Naive thymus-derived CD4-positive, alpha-beta T cell (primary cell): ENCODE measurements at regions of chr1 and their contacts with region 1.

Region 1: DNA sequence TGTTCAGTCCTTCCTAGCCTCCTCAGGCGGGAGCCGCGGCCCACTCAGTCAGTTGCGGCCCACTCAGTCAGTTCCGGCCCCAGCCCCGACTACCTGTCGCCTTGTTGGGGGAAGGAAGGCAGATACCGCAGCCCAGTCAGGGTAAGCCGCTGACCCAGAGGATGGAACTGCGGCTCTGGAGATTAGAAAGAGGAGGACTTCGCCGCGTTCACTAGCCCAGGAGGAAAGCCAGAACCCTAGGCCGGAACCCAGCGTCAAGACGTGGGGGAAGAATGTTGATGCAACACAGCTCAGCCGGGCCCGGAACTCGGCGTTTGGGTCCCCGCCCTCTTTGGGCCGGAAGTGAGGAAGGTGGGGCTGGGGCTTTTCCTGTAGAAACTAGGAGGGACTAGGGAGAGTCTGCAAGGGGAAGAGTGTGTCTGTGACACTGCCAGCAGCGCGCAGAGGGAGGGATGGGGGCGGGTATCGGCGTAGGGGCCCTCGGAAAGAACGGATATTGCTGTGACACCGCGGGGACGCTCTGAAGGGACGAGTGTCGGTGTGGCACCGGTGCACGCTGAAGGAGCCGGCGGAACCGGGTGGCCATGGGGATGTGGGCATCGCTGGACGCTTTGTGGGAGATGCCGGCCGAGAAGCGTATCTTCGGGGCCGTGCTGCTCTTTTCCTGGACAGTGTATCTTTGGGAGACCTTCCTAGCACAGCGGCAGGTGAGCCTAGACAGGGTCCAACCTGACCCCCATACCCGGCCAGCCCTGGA is at the start of gene ZMPSTE24:
- DNase-seq: peak; percentile 84 to 98 (median 95)
- ATAC-seq: peak; percentile 98
- H3K4me3 ChIP-seq: peak within 1 kb of the TSS; percentile 98
- H3K4me3 Mint-ChIP-seq: peak within 1 kb of the TSS; percentile 91 to 100 (median 98)
- H3K27ac ChIP-seq: peak within 1 kb of the TSS; percentile 98
- H3K27ac Mint-ChIP-seq: peak within 1 kb of the TSS; percentile 97 to 100 (median 100)
- H3K4me1 ChIP-seq: peaks cover 14% of the 10 kb centered on the region in 2 donors
- H3K4me1 Mint-ChIP-seq: peaks cover 27 to 71% (median 60%) of the 10 kb centered on the region in 7 donors
- H3K27me3 ChIP-seq: no peaks in the 10 kb centered on the region
- H3K27me3 Mint-ChIP-seq: peaks cover 0 to 4% (median 0%) of the 10 kb centered on the region in 5 donors
- total RNA-seq, gene ZMPSTE24: 9.5 to 31.0 (median 14.1) TPM

Region 2: DNA sequence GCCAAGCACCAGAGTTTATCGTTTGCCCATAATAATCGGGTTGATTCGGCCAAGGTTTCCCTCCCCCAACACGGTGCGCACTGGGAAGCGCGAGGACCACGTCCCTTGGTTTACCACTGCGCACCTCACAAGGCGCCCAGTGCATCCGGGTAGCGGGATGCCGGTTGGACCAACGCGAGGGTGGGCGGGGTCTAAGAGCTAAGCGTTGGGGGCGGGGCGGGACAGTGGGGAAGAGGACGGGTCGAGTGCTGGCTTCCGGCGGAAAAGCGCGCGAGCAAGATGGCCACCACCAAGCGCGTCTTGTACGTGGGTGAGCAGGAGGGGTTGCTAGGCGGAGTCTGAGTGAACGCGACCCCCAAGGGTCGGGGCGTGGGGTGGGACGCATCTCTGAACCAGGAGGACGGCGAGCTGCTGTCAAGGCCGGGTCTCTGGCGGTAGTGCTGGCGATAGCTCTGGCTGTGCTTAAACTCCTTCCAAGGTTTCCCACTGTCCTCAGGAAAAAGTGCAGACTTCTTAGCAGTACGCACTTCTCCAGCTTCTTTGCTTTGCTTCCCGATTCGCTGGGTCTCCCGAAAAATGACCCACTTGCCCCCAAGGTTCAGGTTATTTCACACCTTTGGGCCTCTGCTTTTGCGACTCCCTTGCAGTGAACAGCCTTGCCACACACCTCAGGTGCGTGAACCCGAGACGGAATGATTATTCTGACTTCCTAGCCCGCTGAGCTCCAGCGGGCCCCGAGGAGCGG is 519.1 kb before region 1 on chr1 and contains the start of gene PPIE:
- CTCF ChIA-PET with region 1: no interaction called
- POLR2A ChIA-PET with region 1: no interaction called
- intact Hi-C with region 1: loop called in 1 of 2 experiments (anchors 5 kb)
- DNase-seq: peak; percentile 71 to 88 (median 85)
- ATAC-seq: peak; percentile 99
- H3K4me3 ChIP-seq: peak within 1 kb of the TSS; percentile 88
- H3K4me3 Mint-ChIP-seq: peak within 1 kb of the TSS; percentile 86 to 98 (median 96)
- H3K27ac ChIP-seq: peak within 1 kb of the TSS; percentile 74
- H3K27ac Mint-ChIP-seq: peak within 1 kb of the TSS; percentile 92 to 97 (median 96)
- H3K4me1 ChIP-seq: peaks cover 16 to 17% of the 10 kb centered on the region in 2 donors
- H3K4me1 Mint-ChIP-seq: peaks cover 21 to 44% (median 38%) of the 10 kb centered on the region in 7 donors
- H3K27me3 ChIP-seq: no peaks in the 10 kb centered on the region
- H3K27me3 Mint-ChIP-seq: peaks cover 2 to 16% (median 11%) of the 10 kb centered on the region in 5 donors
- total RNA-seq, gene PPIE: 52.3 to 79.1 (median 61.3) TPM

Region 3: GRCh38 chr1:40143891-40144575 is 113.8 kb before region 1 on chr1:
- CTCF ChIA-PET with region 1: no interaction called
- POLR2A ChIA-PET with region 1: no interaction called
- intact Hi-C with region 1: no loop called
- DNase-seq: peak; percentile 19 to 72 (median 57)
- ATAC-seq: peak; percentile 84
- H3K4me3 ChIP-seq: no peak overlapping the region
- H3K4me3 Mint-ChIP-seq: no peak overlapping the region
- H3K27ac ChIP-seq: no peak overlapping the region
- H3K27ac Mint-ChIP-seq: peak overlapping the region in 1 of 9 donors; percentile 5
- H3K4me1 ChIP-seq: no peaks in the 10 kb centered on the region
- H3K4me1 Mint-ChIP-seq: peaks cover 0 to 12% (median 0%) of the 10 kb centered on the region in 7 donors
- H3K27me3 ChIP-seq: no peaks in the 10 kb centered on the region
- H3K27me3 Mint-ChIP-seq: peaks cover 5 to 61% (median 17%) of the 10 kb centered on the region in 5 donors

Region 4: DNA sequence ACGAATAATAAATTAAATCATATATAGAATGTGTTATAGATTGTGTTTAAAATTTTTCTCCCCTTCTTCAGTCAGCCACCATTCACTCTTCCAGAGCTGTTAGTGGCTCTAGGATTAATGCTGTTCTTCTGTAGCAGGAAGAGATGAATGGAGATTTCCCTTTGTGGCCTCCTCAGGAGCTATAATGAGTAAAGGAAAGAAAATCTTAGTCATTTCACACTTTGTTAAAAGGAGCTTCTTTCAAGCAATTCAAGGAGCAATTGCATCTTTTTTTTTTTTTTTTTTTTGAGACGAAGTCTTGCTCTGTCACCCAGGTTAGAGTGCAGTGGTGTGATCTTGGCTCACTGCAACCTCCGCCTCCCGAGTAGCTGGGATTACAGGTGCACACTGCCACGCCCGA is 33.8 kb before region 1 on chr1:
- CTCF ChIA-PET with region 1: no interaction called
- POLR2A ChIA-PET with region 1: no interaction called
- intact Hi-C with region 1: loop called in 1 of 2 experiments (anchors 5 kb)
- DNase-seq: no peak
- ATAC-seq: no peak
- H3K4me3 ChIP-seq: no peak overlapping the region
- H3K4me3 Mint-ChIP-seq: no peak overlapping the region
- H3K27ac ChIP-seq: no peak overlapping the region
- H3K27ac Mint-ChIP-seq: no peak overlapping the region
- H3K4me1 ChIP-seq: no peaks in the 10 kb centered on the region
- H3K4me1 Mint-ChIP-seq: peaks cover 0 to 10% (median 3%) of the 10 kb centered on the region in 7 donors
- H3K27me3 ChIP-seq: no peaks in the 10 kb centered on the region
- H3K27me3 Mint-ChIP-seq: no peaks in the 10 kb centered on the region

Region 5: GRCh38 chr1:40315239-40315794 is 57.5 kb after region 1 on chr1:
- CTCF ChIA-PET with region 1: no interaction called
- POLR2A ChIA-PET with region 1: interaction called, 5 read pairs
- intact Hi-C with region 1: loop called (anchors 1 kb)
- DNase-seq: peak; percentile 70 to 90 (median 86)
- ATAC-seq: peak; percentile 94
- H3K4me3 ChIP-seq: peak overlapping the region; percentile 73
- H3K4me3 Mint-ChIP-seq: peak overlapping the region; percentile 84 to 95 (median 88)
- H3K27ac ChIP-seq: peak overlapping the region; percentile 46
- H3K27ac Mint-ChIP-seq: peak overlapping the region; percentile 43 to 84 (median 76)
- H3K4me1 ChIP-seq: peaks cover 8% of the 10 kb centered on the region in 2 donors
- H3K4me1 Mint-ChIP-seq: peaks cover 11 to 66% (median 34%) of the 10 kb centered on the region in 7 donors
- H3K27me3 ChIP-seq: no peaks in the 10 kb centered on the region
- H3K27me3 Mint-ChIP-seq: peaks cover 7 to 36% (median 13%) of the 10 kb centered on the region in 5 donors

Region 6: DNA sequence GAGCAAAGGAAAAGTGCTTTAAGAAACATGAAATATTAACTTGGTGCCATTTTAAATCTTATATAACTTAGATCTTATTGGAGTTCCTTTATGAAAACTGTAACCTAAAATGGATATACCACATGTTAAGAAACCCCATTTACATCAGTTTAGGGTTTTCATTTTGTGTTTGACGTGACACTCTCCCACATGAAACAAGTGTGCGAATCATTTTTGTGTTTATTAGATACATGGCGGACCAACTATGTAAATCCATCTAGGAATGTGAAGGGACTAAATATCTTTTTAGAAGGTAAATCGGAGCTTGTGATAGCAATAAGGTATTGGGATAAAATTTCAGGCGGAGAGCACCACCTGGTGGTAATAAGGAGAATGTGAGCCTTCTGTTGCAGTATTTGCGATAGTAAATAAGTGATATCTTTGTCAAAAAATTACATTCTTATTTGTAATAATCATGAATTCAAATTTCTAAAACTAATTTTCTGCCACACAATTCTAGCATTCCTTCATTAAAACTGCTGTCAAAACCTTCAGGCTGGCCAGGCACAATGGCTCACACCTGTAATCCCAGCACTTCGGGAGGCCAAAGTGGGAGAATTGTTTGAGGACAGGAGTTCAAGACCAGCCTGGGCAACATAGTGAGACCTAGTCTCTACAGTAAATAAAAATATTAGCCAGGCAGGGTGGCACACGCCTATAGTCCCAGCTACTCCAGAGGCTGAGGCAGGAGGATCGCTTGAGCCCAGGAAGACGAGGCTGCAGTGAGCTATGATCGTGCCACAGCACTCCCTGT is 147.0 kb after region 1 on chr1:
- CTCF ChIA-PET with region 1: interaction called, 3 read pairs
- POLR2A ChIA-PET with region 1: no interaction called
- intact Hi-C with region 1: loop called (anchors 2 kb)
- DNase-seq: peak in 7 of 9 donors; percentile 65 to 84 (median 78)
- ATAC-seq: peak; percentile 85
- H3K4me3 ChIP-seq: no peak overlapping the region
- H3K4me3 Mint-ChIP-seq: peak overlapping the region; percentile 0 to 85 (median 71)
- H3K27ac ChIP-seq: peak overlapping the region; percentile 92
- H3K27ac Mint-ChIP-seq: peak overlapping the region; percentile 84 to 98 (median 92)
- H3K4me1 ChIP-seq: peaks cover 40 to 52% of the 10 kb centered on the region in 2 donors
- H3K4me1 Mint-ChIP-seq: peaks cover 42 to 92% (median 79%) of the 10 kb centered on the region in 7 donors
- H3K27me3 ChIP-seq: no peaks in the 10 kb centered on the region
- H3K27me3 Mint-ChIP-seq: no peaks in the 10 kb centered on the region

Region 7: GRCh38 chr1:40691538-40692428 is 433.9 kb after region 1 on chr1 and contains the start of gene NFYC:
- CTCF ChIA-PET with region 1: no interaction called
- POLR2A ChIA-PET with region 1: interaction called, 3 read pairs
- intact Hi-C with region 1: loop called in 1 of 2 experiments (anchors 10 kb)
- DNase-seq: peak; percentile 82 to 97 (median 96)
- ATAC-seq: peak; percentile 89
- H3K4me3 ChIP-seq: peak within 1 kb of the TSS; percentile 81
- H3K4me3 Mint-ChIP-seq: peak within 1 kb of the TSS; percentile 91 to 98 (median 95)
- H3K27ac ChIP-seq: peak within 1 kb of the TSS; percentile 99
- H3K27ac Mint-ChIP-seq: peak within 1 kb of the TSS; percentile 91 to 99 (median 97)
- H3K4me1 ChIP-seq: peaks cover 30 to 38% of the 10 kb centered on the region in 2 donors
- H3K4me1 Mint-ChIP-seq: peaks cover 29 to 73% (median 64%) of the 10 kb centered on the region in 7 donors
- H3K27me3 ChIP-seq: no peaks in the 10 kb centered on the region
- H3K27me3 Mint-ChIP-seq: no peaks in the 10 kb centered on the region
- total RNA-seq, gene NFYC: 44.2 to 88.5 (median 73.6) TPM